Activated CD4-positive, alpha-beta memory T cell treated with anti-CD3 and anti-CD28 coated beads for 36 hours (primary cell): ENCODE measurements at regions of chr6 and their contacts with region 1.

Region 1: GRCh38 chr6:116279260-116280063 is at the start of gene TSPYL1:
- DNase-seq: peak; percentile 97
- H3K4me3 Mint-ChIP-seq: peak within 1 kb of the TSS; percentile 91
- H3K27ac Mint-ChIP-seq: peak within 1 kb of the TSS; percentile 95
- H3K4me1 Mint-ChIP-seq: peaks cover 50% of the 10 kb centered on the region
- H3K27me3 Mint-ChIP-seq: no peaks in the 10 kb centered on the region
- total RNA-seq, gene TSPYL1: 41.4 to 42.0 TPM

Region 2: GRCh38 chr6:115982453-115982852 is 297.0 kb before region 1 on chr6:
- CTCF ChIA-PET with region 1: no interaction called
- POLR2A ChIA-PET with region 1: no interaction called
- intact Hi-C with region 1: no loop called
- DNase-seq: no peak
- H3K4me3 Mint-ChIP-seq: no peak overlapping the region
- H3K27ac Mint-ChIP-seq: no peak overlapping the region
- H3K4me1 Mint-ChIP-seq: no peaks in the 10 kb centered on the region
- H3K27me3 Mint-ChIP-seq: no peaks in the 10 kb centered on the region

Region 3: GRCh38 chr6:116034327-116034726 is 245.1 kb before region 1 on chr6:
- CTCF ChIA-PET with region 1: no interaction called
- POLR2A ChIA-PET with region 1: no interaction called
- intact Hi-C with region 1: no loop called
- DNase-seq: no peak
- H3K4me3 Mint-ChIP-seq: no peak overlapping the region
- H3K27ac Mint-ChIP-seq: no peak overlapping the region
- H3K4me1 Mint-ChIP-seq: no peaks in the 10 kb centered on the region
- H3K27me3 Mint-ChIP-seq: peaks cover 4% of the 10 kb centered on the region

Region 4: DNA sequence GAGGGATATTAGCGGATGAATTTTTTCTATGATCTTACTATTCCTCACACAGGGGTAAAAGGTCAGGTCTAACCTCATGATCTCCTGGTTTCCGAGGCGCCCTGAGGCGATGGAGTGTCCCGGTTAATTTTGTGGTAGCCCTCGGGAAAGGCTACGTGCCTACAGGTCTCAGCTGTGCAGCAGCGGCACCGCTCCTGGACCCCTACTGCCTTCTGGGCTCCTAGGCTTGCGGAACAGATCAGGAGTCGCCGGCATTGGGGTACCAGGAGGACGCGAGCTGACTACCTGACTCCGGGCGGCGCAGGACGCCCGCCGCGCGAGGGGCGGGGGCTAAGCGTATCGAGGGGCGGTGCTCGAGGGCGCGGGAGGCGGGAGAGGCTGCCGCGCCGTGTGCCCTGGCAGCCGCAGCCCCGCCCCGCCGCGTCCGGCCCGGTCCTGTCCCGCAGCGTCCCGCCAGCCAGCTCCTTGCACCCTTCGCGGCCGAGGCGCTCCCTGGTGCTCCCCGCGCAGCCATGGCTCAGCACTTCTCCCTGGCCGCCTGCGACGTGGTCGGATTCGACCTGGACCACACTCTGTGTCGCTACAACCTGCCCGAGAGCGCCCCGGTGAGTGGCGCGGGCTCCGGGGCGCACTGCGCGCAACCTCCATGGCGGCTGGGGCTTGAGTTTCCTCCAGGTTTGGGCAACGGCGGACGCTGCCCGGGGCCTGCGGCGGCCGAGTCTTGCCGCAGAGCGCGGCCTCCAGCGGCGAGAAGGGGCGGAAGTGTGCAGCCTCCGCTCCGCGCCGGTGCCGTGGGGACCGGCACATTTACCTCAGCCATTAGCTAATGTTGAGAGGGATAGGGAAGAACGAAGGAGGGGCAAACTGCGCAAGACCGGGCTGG is 178.8 kb before region 1 on chr6 and contains the start of gene NT5DC1:
- CTCF ChIA-PET with region 1: no interaction called
- POLR2A ChIA-PET with region 1: interaction called, 3 read pairs
- intact Hi-C with region 1: loop called (anchors 2 kb)
- DNase-seq: peak; percentile 90
- H3K4me3 Mint-ChIP-seq: peak within 1 kb of the TSS; percentile 89
- H3K27ac Mint-ChIP-seq: peak within 1 kb of the TSS; percentile 82
- H3K4me1 Mint-ChIP-seq: peaks cover 47% of the 10 kb centered on the region
- H3K27me3 Mint-ChIP-seq: no peaks in the 10 kb centered on the region
- total RNA-seq, gene NT5DC1: 51.1 to 51.3 TPM

Region 5: GRCh38 chr6:116253505-116254296 is 25.8 kb before region 1 on chr6 and contains the start of gene TSPYL4:
- CTCF ChIA-PET with region 1: no interaction called
- POLR2A ChIA-PET with region 1: interaction called, 13 read pairs
- intact Hi-C with region 1: loop called (anchors 1 kb)
- DNase-seq: peak; percentile 95
- H3K4me3 Mint-ChIP-seq: no peak within 1 kb of the TSS
- H3K27ac Mint-ChIP-seq: no peak within 1 kb of the TSS
- H3K4me1 Mint-ChIP-seq: peaks cover 8% of the 10 kb centered on the region
- H3K27me3 Mint-ChIP-seq: no peaks in the 10 kb centered on the region
- total RNA-seq, gene TSPYL4: 10.5 to 11.1 TPM

Region 6: GRCh38 chr6:116300566-116300965 is 21.1 kb after region 1 on chr6:
- CTCF ChIA-PET with region 1: no interaction called
- POLR2A ChIA-PET with region 1: no interaction called
- intact Hi-C with region 1: no loop called
- DNase-seq: no peak
- H3K4me3 Mint-ChIP-seq: no peak overlapping the region
- H3K27ac Mint-ChIP-seq: no peak overlapping the region
- H3K4me1 Mint-ChIP-seq: no peaks in the 10 kb centered on the region
- H3K27me3 Mint-ChIP-seq: no peaks in the 10 kb centered on the region

Region 7: GRCh38 chr6:116371120-116371917 is 91.9 kb after region 1 on chr6:
- CTCF ChIA-PET with region 1: no interaction called
- POLR2A ChIA-PET with region 1: no interaction called
- intact Hi-C with region 1: loop called (anchors 2 kb)
- DNase-seq: peak; percentile 49
- H3K4me3 Mint-ChIP-seq: peak overlapping the region; percentile 75
- H3K27ac Mint-ChIP-seq: no peak overlapping the region
- H3K4me1 Mint-ChIP-seq: peaks cover 15% of the 10 kb centered on the region
- H3K27me3 Mint-ChIP-seq: no peaks in the 10 kb centered on the region

Region 8: GRCh38 chr6:116615937-116616736 is 336.7 kb after region 1 on chr6 and contains the start of gene RSPH4A:
- CTCF ChIA-PET with region 1: no interaction called
- POLR2A ChIA-PET with region 1: no interaction called
- intact Hi-C with region 1: loop called (anchors 1 kb)
- DNase-seq: peak; percentile 85
- H3K4me3 Mint-ChIP-seq: peak within 1 kb of the TSS; percentile 82
- H3K27ac Mint-ChIP-seq: no peak within 1 kb of the TSS
- H3K4me1 Mint-ChIP-seq: peaks cover 17% of the 10 kb centered on the region
- H3K27me3 Mint-ChIP-seq: no peaks in the 10 kb centered on the region
- total RNA-seq, gene RSPH4A: not detected

Region 9: GRCh38 chr6:116680975-116681808 is 401.7 kb after region 1 on chr6 and contains the start of gene KPNA5:
- CTCF ChIA-PET with region 1: no interaction called
- POLR2A ChIA-PET with region 1: interaction called, 3 read pairs
- intact Hi-C with region 1: loop called (anchors 1 kb)
- DNase-seq: peak; percentile 95
- H3K4me3 Mint-ChIP-seq: peak within 1 kb of the TSS; percentile 99
- H3K27ac Mint-ChIP-seq: peak within 1 kb of the TSS; percentile 96
- H3K4me1 Mint-ChIP-seq: peaks cover 41% of the 10 kb centered on the region
- H3K27me3 Mint-ChIP-seq: no peaks in the 10 kb centered on the region
- total RNA-seq, gene KPNA5: 10.0 to 10.2 TPM